Sigmoid colon (tissue), 7 donors: ENCODE measurements at regions of chr2 and their contacts with region 1.

Region 1: DNA sequence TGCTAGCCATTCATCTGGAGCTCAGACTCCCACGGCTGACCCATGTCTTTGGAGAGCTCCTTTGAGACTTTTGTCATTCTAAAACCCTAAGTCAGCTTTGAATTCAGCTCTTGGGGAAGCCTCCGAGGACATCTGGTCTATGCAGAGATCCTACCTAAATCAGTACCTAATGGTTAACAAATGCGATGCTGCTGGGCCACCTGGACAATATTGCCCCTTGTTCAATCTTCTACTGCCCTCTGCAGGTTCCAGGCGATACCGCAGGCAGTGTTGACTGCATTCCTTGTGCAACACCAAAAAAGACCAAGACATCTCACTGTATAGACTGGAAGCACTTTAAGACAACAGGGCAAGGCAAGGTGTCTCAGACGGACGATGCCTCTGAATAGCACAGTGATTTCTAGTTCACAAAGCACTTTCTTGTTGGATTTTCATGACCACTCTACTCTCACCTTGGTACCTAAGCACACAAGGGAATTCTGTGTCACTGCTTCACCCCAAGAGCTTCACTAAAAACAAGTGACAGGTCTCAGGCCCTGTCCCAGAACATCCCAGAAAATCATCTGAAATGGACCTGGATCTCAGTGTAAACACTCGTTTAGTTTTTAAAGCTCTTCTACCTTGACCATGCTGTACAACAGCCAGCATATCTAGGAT is 80.9 kb downstream of the XDH start:
- DNase-seq: peak; percentile 79
- H3K4me3 ChIP-seq: no peak overlapping the region
- H3K27ac ChIP-seq: no peak overlapping the region
- H3K4me1 ChIP-seq: peaks cover 0 to 8% (median 0%) of the 10 kb centered on the region in 4 donors
- H3K27me3 ChIP-seq: peaks cover 0 to 5% (median 0%) of the 10 kb centered on the region in 3 donors
- CTCF ChIP-seq: peak; percentile 50 to 93 (median 86)
- EP300 ChIP-seq: no peak
- POLR2A ChIP-seq: no peak

Region 2: GRCh38 chr2:30569946-30570345 is 763.7 kb before region 1 on chr2:
- intact Hi-C with region 1: no loop called
- DNase-seq: no peak
- H3K4me3 ChIP-seq: no peak overlapping the region
- H3K27ac ChIP-seq: no peak overlapping the region
- H3K4me1 ChIP-seq: peaks cover 0 to 10% (median 0%) of the 10 kb centered on the region in 4 donors
- H3K27me3 ChIP-seq: no peaks in the 10 kb centered on the region
- CTCF ChIP-seq: no peak
- EP300 ChIP-seq: no peak
- POLR2A ChIP-seq: no peak

Region 3: DNA sequence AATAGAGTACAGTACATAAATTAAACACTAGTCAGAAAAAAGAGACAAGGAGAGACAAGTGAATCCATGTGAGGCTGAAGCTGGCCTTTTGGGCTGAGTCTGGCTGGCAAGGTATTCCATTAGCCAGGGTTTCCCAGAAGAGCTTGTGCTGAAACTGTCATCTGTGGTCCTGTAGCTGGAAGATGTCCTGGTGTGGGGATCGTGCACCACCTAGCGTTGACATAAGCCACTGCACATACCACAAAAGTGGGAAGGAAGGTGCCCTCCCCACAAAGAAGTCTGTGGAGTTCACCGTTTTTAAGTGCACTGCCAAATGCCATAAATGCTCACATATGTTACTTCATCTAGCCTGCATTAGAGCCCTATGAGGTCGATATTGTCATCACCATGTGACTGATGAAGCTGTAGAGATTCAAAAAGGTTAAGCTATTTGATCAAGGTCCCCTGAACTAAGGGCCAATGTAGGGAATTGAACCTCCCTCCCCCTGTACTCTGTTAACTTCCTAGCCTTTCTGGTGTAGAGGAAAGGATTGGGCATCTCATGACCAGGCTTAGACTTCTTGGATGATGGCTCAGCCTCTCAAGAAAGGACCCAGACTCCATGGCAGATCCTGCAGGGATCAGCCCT is 163.5 kb before region 1 on chr2:
- intact Hi-C with region 1: loop called (anchors 5 kb)
- DNase-seq: no peak
- H3K4me3 ChIP-seq: no peak overlapping the region
- H3K27ac ChIP-seq: no peak overlapping the region
- H3K4me1 ChIP-seq: no peaks in the 10 kb centered on the region
- H3K27me3 ChIP-seq: peaks cover 0 to under 1% (median 0%) of the 10 kb centered on the region in 3 donors
- CTCF ChIP-seq: peak; percentile 29 to 82 (median 81)
- EP300 ChIP-seq: no peak
- POLR2A ChIP-seq: no peak

Region 4: GRCh38 chr2:31233741-31234682 is 99.6 kb before region 1 on chr2 and contains the start of gene EHD3:
- intact Hi-C with region 1: loop called (anchors 2 kb)
- DNase-seq: peak; percentile 91
- H3K4me3 ChIP-seq: peak within 1 kb of the TSS; percentile 28 to 68 (median 64)
- H3K27ac ChIP-seq: peak within 1 kb of the TSS; percentile 14 to 76 (median 62)
- H3K4me1 ChIP-seq: peaks cover 0 to 34% (median 20%) of the 10 kb centered on the region in 4 donors
- H3K27me3 ChIP-seq: no peaks in the 10 kb centered on the region
- CTCF ChIP-seq: peak in 3 of 4 experiments; percentile 19 to 46 (median 29)
- EP300 ChIP-seq: no peak
- POLR2A ChIP-seq: no peak
- total RNA-seq, gene EHD3: 2.3 to 7.8 (median 4.0) TPM

Region 5: GRCh38 chr2:31270136-31270535 is 63.5 kb before region 1 on chr2:
- intact Hi-C with region 1: no loop called
- DNase-seq: no peak
- H3K4me3 ChIP-seq: no peak overlapping the region
- H3K27ac ChIP-seq: no peak overlapping the region
- H3K4me1 ChIP-seq: no peaks in the 10 kb centered on the region
- H3K27me3 ChIP-seq: no peaks in the 10 kb centered on the region
- CTCF ChIP-seq: no peak
- EP300 ChIP-seq: no peak
- POLR2A ChIP-seq: no peak